Activated T-helper 2 cell treated with anti-CD3 and anti-CD28 coated beads, Interferon-gamma antibody, Interleukin-2, Interleukin-4, amounts not matched to agents 10 μg/mL and 5 μg/mL and 100 μg/mL, durations not matched to agents 14 hours and 24 hours and 36 hours (primary cell): ENCODE measurements at regions of chr21 and their contacts with region 1.

Region 1: DNA sequence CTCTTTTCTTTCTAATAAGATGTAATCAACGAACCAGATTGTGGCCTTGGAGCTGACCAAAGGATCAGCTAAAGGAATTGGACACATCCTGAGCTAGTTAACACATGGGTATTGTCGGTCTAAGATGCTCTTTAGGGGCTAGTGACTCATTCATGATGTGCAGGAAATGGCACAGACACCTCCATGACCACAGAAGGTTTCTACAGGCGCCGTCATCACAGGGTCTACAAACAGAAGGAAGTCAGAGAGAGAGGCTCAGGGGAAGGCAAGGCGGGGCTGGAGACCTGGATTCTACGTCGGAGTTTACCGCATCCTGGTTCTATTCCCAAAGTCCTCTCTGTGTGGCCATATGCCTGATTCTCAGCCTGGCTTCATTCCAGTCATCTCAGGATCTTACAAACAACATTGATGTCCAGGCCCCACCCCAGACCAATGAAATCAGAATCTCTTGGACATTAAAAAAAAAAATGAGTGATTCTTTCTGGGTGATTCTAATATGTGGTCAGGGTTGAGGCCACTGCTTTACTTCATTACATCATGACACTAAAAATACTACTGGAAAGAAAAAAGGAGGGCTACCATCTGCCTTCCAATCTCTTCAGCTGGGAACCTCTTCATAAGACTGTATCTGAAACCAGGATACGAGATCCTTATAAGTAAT is 11.8 kb upstream of the KCNJ15 start:
- DNase-seq: peak; percentile 54
- H3K4me3 Mint-ChIP-seq: peak overlapping the region; percentile 1
- H3K27ac Mint-ChIP-seq: peak overlapping the region; percentile 81
- H3K4me1 Mint-ChIP-seq: peaks cover 35% of the 10 kb centered on the region
- H3K27me3 Mint-ChIP-seq: peaks cover 15% of the 10 kb centered on the region

Region 2: DNA sequence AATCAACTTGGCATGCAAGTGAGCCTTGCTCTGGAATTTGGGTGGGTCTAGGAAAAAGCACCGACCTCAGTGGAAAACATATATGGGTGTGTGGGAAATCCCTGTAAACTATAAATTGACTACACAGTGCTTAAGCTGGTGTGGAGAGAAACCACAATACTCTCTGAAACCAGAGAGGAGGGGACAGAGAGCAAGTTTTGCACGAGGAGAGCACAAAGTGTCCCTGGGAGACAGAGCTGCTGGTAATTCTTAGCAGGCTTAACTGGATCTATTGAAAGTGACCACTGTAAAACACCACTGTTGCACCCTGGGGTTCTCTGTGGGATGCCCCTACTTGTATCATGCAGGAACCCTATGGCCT is 24.5 kb after region 1 on chr21:
- intact Hi-C with region 1: loop called (anchors 1 kb)
- DNase-seq: no peak
- H3K4me3 Mint-ChIP-seq: no peak overlapping the region
- H3K27ac Mint-ChIP-seq: no peak overlapping the region
- H3K4me1 Mint-ChIP-seq: peaks cover 32% of the 10 kb centered on the region
- H3K27me3 Mint-ChIP-seq: peaks cover 12% of the 10 kb centered on the region

Region 3: GRCh38 chr21:38282921-38283320 is 37.9 kb after region 1 on chr21:
- intact Hi-C with region 1: loop called (anchors 5 kb)
- DNase-seq: no peak
- H3K4me3 Mint-ChIP-seq: no peak overlapping the region
- H3K27ac Mint-ChIP-seq: no peak overlapping the region
- H3K4me1 Mint-ChIP-seq: peaks cover 3% of the 10 kb centered on the region
- H3K27me3 Mint-ChIP-seq: peaks cover 9% of the 10 kb centered on the region

Region 4: DNA sequence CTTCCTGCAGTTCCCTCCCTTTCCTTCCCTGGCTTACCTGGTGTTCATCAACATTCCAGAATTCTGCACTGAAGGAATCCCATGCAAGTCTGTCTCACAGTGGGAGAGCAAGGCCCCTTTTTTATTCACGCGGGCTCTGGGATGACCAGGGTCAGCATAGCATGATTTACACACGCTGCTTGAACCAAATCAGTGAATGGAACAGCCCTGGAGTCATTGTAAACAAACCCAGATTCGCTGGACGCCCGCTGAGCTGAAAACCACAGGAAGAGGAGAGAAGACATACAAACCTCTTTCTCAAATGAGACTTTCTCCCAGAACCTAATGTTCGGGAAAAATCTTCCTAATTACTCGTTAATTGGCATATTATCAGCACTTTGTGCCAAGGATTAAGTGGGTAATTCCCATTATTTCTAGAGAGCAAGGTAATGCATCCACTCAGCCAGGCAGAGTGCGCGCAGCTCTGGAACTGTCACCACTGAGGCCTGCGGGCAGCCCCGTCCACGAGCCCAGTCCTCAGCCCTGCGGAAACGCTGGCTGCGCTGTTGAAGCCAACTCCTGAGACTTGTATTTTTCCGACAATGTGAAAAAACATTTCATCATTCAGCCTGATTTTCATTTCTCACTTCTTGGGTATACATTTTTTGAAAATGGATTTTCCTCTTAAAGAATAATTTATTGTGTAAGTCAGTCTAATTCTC is 700.7 kb after region 1 on chr21:
- intact Hi-C with region 1: no loop called
- DNase-seq: no peak
- H3K4me3 Mint-ChIP-seq: no peak overlapping the region
- H3K27ac Mint-ChIP-seq: no peak overlapping the region
- H3K4me1 Mint-ChIP-seq: no peaks in the 10 kb centered on the region
- H3K27me3 Mint-ChIP-seq: no peaks in the 10 kb centered on the region